OCI-LY7 (cell line): ENCODE measurements at regions of chr12 and their contacts with region 1.

Region 1: DNA sequence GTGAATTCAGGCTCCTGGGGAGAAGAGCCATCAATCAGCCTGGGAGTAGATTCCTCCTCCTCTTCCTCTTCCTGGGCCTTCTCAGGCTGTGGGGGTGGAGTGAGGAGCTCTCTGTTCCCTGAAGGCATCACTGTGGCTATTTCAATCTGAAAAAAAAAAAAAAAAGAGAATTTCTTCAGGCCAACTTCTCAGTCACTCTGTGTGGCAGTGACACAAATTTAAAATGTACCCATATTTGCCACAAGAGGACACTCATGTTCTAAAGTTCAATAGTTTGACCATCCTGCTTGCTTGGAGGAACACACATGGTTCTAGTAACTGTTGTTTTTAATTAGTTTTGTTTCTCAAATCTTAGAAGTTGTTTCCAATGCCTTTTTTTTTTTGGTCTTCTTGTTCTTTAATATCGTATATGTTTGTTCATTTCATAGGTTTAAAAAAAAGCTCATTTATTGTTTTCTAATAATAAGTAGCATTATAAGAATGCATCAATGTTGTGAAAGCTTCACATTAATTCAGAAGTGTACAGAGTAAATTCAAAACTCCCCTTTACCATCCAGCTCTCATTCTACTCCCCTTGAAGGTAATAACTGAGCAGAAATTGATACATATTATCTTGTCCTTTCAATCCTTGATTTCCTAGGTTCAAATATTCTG is 23.3 kb upstream of the CCER1 start:
- DNase-seq: peak; percentile 26
- H3K4me3 ChIP-seq: no peak overlapping the region
- H3K27ac ChIP-seq: no peak overlapping the region
- H3K4me1 ChIP-seq: no peaks in the 10 kb centered on the region
- CTCF ChIP-seq: peak; percentile 73

Region 2: GRCh38 chr12:91109148-91109564 is 130.9 kb after region 1 on chr12:
- CTCF ChIA-PET with region 1: no interaction called
- POLR2A ChIA-PET with region 1: no interaction called
- intact Hi-C with region 1: loop called (anchors 5 kb)
- DNase-seq: peak; percentile 54
- H3K4me3 ChIP-seq: no peak overlapping the region
- H3K27ac ChIP-seq: no peak overlapping the region
- H3K4me1 ChIP-seq: no peaks in the 10 kb centered on the region
- CTCF ChIP-seq: peak; percentile 91

Region 3: GRCh38 chr12:91274916-91275315 is 296.7 kb after region 1 on chr12:
- CTCF ChIA-PET with region 1: no interaction called
- POLR2A ChIA-PET with region 1: no interaction called
- intact Hi-C with region 1: no loop called
- DNase-seq: no peak
- H3K4me3 ChIP-seq: no peak overlapping the region
- H3K27ac ChIP-seq: no peak overlapping the region
- H3K4me1 ChIP-seq: no peaks in the 10 kb centered on the region
- CTCF ChIP-seq: no peak

Region 4: DNA sequence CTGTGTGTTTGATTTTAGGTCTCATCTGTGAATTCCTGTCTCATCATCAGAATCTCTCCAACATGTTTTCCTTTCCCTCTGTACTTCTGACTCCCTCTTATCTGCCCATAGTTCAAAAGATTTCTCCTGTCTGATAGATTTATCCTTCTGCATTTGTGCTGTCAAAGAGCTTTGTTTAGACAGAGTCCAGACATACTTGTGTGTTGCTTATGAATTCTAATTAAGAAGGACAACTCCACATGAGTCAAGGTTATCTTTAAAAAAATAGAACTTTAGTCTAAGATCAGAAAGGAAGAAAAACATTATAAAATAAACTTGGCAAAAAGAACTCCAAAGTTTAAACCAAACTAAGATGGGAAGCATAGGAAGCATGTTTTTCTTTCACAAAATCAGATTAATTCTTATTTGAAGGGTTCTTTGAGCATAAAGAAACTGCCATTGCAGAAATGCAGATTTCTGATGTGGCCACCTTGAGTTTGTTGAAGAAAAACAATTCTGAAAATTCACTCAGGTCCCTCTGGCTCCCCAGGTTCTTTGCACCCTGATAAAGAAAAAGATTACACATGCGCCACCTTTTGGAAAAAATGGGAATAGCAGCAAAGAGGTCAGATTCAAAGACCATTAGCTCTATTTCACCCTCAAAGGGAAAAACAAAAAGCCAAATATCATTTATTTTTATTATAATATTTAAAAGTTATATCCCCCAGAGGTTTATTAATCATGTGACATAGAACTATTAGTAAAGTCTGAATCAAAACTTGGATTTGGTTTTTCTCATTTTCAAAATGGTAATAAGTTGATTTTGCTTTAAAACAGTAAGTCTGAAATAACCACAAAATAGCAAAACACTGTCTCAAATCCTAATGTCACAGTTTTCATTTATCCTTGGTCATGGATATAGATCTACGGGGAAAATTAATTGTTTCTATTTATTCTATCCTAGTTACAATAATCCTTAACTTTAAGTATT is 348.1 kb after region 1 on chr12:
- CTCF ChIA-PET with region 1: no interaction called
- POLR2A ChIA-PET with region 1: interaction called, 3 read pairs
- intact Hi-C with region 1: loop called (anchors 5 kb)
- DNase-seq: peak; percentile 42
- H3K4me3 ChIP-seq: no peak overlapping the region
- H3K27ac ChIP-seq: no peak overlapping the region
- H3K4me1 ChIP-seq: no peaks in the 10 kb centered on the region
- CTCF ChIP-seq: peak; percentile 93

Region 5: GRCh38 chr12:91355150-91356006 is 377.1 kb after region 1 on chr12:
- CTCF ChIA-PET with region 1: no interaction called
- POLR2A ChIA-PET with region 1: no interaction called
- intact Hi-C with region 1: loop called (anchors 1 kb)
- DNase-seq: peak; percentile 50
- H3K4me3 ChIP-seq: no peak overlapping the region
- H3K27ac ChIP-seq: no peak overlapping the region
- H3K4me1 ChIP-seq: no peaks in the 10 kb centered on the region
- CTCF ChIP-seq: peak; percentile 82